Dorsolateral prefrontal cortex (tissue), 120 donors: ENCODE measurements at regions of chr6 and their contacts with region 1.

Region 1: DNA sequence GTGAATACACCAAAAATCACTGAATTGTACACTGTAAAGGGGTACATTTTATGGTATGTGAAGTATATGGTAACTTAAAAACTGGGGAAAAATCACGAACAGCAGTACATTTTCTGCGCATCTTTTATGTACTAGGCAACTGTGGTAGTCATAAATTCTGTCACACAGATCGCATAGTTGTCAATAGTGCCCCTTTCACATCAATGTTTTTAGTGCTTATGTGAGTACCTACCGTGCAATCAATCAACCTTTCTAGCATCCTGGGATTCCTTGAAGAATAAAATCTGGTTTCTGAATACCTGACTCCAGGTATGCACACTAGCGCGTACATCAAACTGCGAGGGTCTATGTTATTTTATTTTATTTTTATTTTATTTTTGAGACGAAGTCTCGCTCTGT is 637 bp upstream of the RPF2 start:
- DNase-seq: no peak
- H3K4me3 ChIP-seq: peak overlapping the region; percentile 62 to 99 (median 91)
- H3K27ac ChIP-seq: peak overlapping the region in 58 of 59 donors; percentile 46 to 99 (median 91)
- H3K27me3 ChIP-seq: no peaks in the 10 kb centered on the region
- CTCF ChIP-seq: no peak

Region 2: GRCh38 chr6:110415086-110415916 is 565.9 kb before region 1 on chr6 and contains the start of gene DDO:
- intact Hi-C with region 1: loop called in 1 of 2 experiments (anchors 10 kb)
- DNase-seq: peak; percentile 49 to 90 (median 80)
- H3K4me3 ChIP-seq: peak within 1 kb of the TSS; percentile 34 to 76 (median 53)
- H3K27ac ChIP-seq: peak within 1 kb of the TSS; percentile 26 to 95 (median 85)
- H3K27me3 ChIP-seq: peaks cover 0 to 3% (median 0%) of the 10 kb centered on the region in 45 donors
- CTCF ChIP-seq: peak in 6 of 56 donors; percentile 4 to 34 (median 16)
- total RNA-seq, gene DDO: 1.2 to 8.6 (median 3.6) TPM

Region 3: GRCh38 chr6:110958329-110959192 is 22.6 kb before region 1 on chr6 and contains the start of gene GTF3C6:
- intact Hi-C with region 1: loop called (anchors 2 kb)
- DNase-seq: peak; percentile 90 to 96 (median 94)
- H3K4me3 ChIP-seq: peak within 1 kb of the TSS; percentile 56 to 98 (median 88)
- H3K27ac ChIP-seq: peak within 1 kb of the TSS; percentile 78 to 100 (median 96)
- H3K27me3 ChIP-seq: no peaks in the 10 kb centered on the region
- CTCF ChIP-seq: peak in 26 of 56 donors; percentile 3 to 58 (median 30)
- total RNA-seq, gene GTF3C6: 30.8 to 68.0 (median 43.6) TPM

Region 4: DNA sequence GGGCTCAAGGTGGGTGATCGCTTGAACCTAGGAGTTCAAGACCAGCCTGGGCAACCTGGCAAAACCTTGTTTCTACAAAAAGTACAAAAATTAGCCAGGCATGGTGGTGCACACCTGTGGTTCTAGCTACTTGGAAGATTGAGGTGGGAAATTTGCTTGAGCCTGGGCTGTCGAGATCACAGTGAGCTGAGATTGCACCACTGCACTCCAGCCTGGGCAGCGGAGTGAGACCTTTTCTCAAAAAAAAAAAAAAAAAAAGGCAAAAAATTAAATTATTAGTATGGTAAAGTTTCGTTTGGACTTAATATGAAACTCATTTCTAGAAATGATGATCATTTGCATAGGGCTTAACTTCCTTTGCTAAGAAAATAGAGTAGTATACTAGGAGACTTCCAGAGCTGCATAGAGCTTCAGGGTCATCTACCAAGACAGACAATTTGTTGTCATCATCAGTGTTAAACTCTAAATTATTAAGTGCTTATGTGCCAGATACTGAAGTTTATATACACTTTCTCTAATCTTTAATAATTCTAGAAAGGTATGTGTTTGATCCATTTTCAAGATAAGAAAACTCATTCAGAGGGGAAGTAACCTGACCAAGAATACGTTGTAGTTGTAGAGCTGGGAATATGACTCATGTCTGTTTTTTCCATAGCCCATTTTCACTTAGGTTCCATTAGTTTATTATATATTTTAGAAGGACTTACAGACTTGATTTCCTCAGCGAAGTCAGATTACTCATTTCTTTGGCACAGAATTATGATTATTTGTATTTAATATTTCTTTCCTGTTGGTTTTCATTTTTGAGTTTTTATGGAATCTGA is 190.6 kb after region 1 on chr6:
- intact Hi-C with region 1: no loop called
- DNase-seq: no peak
- H3K4me3 ChIP-seq: no peak overlapping the region
- H3K27ac ChIP-seq: no peak overlapping the region
- H3K27me3 ChIP-seq: no peaks in the 10 kb centered on the region
- CTCF ChIP-seq: no peak

Region 5: DNA sequence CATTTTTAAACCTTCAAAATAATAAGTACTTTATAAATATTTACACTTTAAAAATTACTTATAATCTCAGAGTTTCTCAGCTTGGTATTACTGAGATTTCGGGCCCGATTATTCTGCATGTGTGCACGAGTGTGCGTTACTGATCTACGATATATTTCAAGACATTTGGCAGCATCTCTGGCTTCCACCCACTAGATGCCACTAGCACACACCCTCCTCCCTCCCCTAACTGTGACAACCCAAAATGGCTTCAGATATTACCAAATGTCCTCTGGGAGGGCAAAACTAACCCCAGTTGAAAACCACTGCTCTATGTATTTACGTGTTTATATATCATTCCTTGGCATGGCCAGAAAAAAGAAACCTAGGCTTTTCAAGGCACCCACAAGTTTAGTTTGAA is 796.2 kb after region 1 on chr6:
- intact Hi-C with region 1: no loop called
- DNase-seq: no peak
- H3K4me3 ChIP-seq: peak overlapping the region in 1 of 59 donors; percentile 15
- H3K27ac ChIP-seq: peak overlapping the region in 52 of 59 donors; percentile 1 to 82 (median 57)
- H3K27me3 ChIP-seq: no peaks in the 10 kb centered on the region
- CTCF ChIP-seq: peak in 32 of 56 donors; percentile 5 to 55 (median 28)